Right ventricle myocardium superior (tissue), 1 donor: ENCODE measurements at regions of chr9 and their contacts with region 1.

Region 1: DNA sequence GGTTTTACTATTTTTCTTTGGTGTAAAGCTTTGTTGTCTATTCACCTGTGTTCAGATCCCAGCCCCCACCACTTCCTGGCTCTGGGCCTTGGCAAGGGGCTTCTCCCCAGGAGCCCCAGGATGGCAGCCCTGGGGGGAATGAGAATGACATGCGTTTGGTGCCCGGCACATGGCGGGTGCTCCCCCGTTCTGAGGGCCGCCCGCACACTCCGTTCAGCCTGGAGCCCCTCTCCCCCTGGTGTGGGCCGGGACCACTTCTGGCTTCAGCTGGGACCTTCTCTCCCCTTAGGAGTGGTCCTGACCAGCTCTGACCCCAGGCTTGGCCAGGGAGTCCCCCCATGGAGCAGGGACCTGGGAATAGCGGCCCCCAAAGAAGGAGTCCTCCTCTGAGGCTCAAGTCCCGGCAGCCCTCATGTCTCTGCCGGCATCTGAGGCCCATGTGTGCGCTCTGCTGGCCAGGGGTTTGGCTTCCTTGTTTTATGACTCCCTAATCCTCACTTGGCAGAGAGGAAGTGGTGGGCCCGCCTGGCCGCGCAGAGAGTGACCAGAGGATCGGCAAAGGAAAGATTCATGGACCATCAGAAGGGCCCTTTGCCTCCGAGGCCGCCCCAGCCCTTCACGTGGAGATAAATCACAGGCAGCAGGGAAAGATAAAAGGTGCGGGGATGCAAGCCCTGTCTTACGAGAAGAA is 57.0 kb upstream of the LMX1B start:
- DNase-seq: no peak
- ATAC-seq: no peak

Region 2: DNA sequence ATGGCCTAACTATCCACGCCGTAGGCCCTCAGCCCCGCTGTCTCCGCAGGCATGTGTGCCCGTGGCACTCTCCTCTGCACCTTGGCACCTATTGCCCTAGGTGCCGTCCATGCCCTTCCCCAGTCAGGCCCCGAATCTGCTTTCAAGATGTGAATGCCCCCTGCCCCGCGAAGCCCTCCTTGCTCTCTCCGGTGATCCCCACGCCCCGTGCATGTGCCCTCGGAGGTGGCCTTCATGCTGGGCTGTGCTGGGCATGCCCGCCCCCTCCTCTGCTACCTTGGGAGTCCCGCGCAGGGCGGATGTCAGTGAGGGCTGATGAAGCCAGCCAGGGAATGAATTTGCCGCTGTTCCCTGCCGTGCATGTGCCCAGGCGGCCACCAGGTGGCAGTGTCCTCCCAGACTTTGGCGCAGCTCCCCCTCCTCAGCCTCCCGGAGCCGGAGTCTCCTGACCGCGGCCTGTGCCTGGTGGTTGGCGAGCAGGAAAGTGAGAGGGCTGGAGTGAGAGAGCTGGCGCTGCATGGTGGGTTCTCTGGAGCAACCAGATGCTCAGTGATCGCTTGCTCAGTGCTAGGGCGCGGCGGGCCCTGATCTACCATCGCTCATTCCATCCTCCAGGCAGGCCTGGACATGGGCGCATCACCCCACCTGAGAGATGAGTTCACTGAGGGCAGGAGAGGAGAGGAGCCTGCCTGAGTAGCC is 55.9 kb before region 1 on chr9:
- intact Hi-C with region 1: loop called (anchors 2 kb)
- DNase-seq: peak; percentile 86
- ATAC-seq: peak; percentile 88

Region 3: GRCh38 chr9:126599047-126599650 is 42.4 kb after region 1 on chr9:
- intact Hi-C with region 1: no loop called
- DNase-seq: no peak
- ATAC-seq: no peak

Region 4: DNA sequence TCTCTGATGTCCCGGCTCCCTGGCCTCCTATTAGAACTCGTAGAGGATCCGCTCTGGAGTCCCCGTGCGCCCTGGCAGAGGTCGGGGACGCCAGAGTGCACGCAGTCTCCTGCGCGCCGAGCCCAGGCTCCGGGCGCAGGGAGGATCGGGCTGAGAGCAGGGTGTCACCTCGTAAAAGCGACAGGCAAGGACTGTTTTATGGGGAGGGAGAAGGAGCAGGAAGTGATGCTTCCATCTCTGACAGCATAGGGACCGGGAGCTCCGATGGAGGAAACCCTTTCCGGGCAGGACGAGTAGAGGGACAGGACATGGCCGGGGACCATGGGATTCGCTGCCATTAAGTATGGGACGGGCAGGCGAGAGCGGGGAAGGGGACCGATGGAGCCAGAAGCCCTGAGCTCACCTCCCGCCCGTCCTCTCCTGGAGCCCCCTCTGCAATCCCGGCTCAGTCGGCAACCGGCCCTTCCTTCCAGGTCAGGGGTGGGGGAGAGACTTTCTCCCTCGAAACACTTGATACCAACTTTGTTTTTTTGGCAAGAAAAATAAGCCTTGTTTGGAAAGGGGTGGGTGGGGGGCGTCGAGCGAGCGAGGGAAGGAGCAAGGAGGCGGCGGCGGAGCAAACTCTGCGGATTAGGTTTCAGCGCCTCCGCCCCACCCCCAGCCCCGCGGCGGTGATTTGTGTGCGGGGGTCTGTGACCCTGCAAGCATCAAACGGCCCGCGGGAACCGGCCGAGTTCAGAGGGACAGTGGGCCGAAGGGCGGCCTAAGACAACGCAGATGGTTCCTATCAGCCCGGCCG is 69.6 kb after region 1 on chr9:
- intact Hi-C with region 1: no loop called
- DNase-seq: no peak
- ATAC-seq: no peak